Activated CD4-positive, alpha-beta memory T cell treated with anti-CD3 and anti-CD28 coated beads for 36 hours (primary cell): ENCODE measurements at regions of chr3 and their contacts with region 1.

Region 1: GRCh38 chr3:71583566-71584449 is at the start of gene FOXP1:
- DNase-seq: peak; percentile 75
- H3K4me3 Mint-ChIP-seq: peak within 1 kb of the TSS; percentile 88
- H3K27ac Mint-ChIP-seq: peak within 1 kb of the TSS; percentile 91
- H3K4me1 Mint-ChIP-seq: peaks cover 56% of the 10 kb centered on the region
- H3K27me3 Mint-ChIP-seq: peaks cover 1% of the 10 kb centered on the region
- total RNA-seq, gene FOXP1: 94.4 to 102 TPM

Region 2: DNA sequence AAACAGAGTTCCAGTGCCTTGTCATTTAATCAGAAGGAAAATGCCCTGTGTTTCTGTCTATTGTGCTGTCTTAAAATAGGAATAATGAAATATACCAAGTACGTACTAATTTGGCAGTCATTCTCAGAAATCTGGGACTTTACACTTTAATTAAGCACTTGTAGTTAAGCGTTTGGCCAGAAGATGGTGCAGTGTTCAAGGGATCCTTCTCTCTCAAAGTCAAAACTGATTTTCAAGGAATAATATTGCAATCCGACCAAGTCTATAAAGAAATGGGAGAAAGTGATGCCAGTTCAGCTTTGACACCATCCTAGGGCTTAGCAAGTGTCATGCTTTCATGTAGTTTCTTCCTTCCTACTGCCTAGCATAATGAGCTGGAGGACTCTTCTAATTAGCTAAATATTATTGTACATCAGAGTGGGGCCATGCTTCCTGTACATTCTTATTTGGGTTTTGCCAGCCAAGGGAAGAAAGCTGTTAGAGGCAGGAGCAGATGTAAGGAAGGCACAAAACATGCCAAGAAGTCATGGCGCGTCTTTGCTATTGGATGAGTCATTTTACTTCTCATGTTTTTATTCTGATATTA is 1519.5 kb before region 1 on chr3:
- CTCF ChIA-PET with region 1: no interaction called
- POLR2A ChIA-PET with region 1: no interaction called
- intact Hi-C with region 1: loop called (anchors 5 kb)
- DNase-seq: no peak
- H3K4me3 Mint-ChIP-seq: no peak overlapping the region
- H3K27ac Mint-ChIP-seq: no peak overlapping the region
- H3K4me1 Mint-ChIP-seq: no peaks in the 10 kb centered on the region
- H3K27me3 Mint-ChIP-seq: no peaks in the 10 kb centered on the region

Region 3: DNA sequence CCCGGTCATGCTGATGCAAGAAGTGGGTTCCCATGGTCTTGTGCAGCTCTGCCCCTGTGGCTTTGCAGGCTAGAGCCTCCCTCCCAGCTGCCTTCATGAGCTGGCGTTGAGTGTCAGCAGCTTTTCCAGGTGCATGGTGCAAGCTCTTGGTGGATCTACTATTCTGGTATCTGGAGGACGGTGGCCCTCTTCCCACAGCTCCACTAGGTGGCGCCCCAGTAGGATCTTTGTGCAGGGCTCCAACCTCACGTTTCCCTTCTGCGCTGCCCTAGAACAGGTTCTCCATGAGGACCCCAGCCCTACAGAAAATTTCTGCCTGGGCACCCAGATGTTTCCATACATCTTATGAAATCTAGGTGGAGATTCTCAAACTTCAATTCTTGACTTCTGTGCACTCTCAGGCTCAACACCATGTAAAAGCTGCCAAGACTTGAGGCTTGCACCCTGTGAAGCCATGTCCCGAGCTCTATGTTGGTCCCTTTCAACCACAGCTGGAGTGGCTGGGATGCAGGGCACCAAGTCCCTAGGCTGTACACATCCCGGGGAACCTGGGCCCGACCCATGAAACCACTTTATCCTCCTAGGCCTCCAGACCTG is 1033.0 kb before region 1 on chr3:
- CTCF ChIA-PET with region 1: interaction called, 16 read pairs
- POLR2A ChIA-PET with region 1: no interaction called
- intact Hi-C with region 1: loop called (anchors 2 kb)
- DNase-seq: peak; percentile 84
- H3K4me3 Mint-ChIP-seq: no peak overlapping the region
- H3K27ac Mint-ChIP-seq: no peak overlapping the region
- H3K4me1 Mint-ChIP-seq: no peaks in the 10 kb centered on the region
- H3K27me3 Mint-ChIP-seq: peaks cover 3% of the 10 kb centered on the region

Region 4: GRCh38 chr3:71010726-71011455 is 572.9 kb before region 1 on chr3:
- CTCF ChIA-PET with region 1: no interaction called
- POLR2A ChIA-PET with region 1: interaction called, 6 read pairs
- intact Hi-C with region 1: loop called (anchors 1 kb)
- DNase-seq: peak; percentile 87
- H3K4me3 Mint-ChIP-seq: peak overlapping the region; percentile 56
- H3K27ac Mint-ChIP-seq: peak overlapping the region; percentile 92
- H3K4me1 Mint-ChIP-seq: peaks cover 68% of the 10 kb centered on the region
- H3K27me3 Mint-ChIP-seq: no peaks in the 10 kb centered on the region

Region 5: GRCh38 chr3:71078723-71079525 is 504.9 kb before region 1 on chr3:
- CTCF ChIA-PET with region 1: no interaction called
- POLR2A ChIA-PET with region 1: no interaction called
- intact Hi-C with region 1: no loop called
- DNase-seq: no peak
- H3K4me3 Mint-ChIP-seq: peak overlapping the region; percentile 40
- H3K27ac Mint-ChIP-seq: peak overlapping the region; percentile 6
- H3K4me1 Mint-ChIP-seq: peaks cover 90% of the 10 kb centered on the region
- H3K27me3 Mint-ChIP-seq: no peaks in the 10 kb centered on the region

Region 6: GRCh38 chr3:71397046-71397445 is 186.8 kb before region 1 on chr3:
- CTCF ChIA-PET with region 1: interaction called, 4 read pairs
- POLR2A ChIA-PET with region 1: interaction called, 4 read pairs
- intact Hi-C with region 1: loop called (anchors 10 kb)
- DNase-seq: no peak
- H3K4me3 Mint-ChIP-seq: no peak overlapping the region
- H3K27ac Mint-ChIP-seq: no peak overlapping the region
- H3K4me1 Mint-ChIP-seq: peaks cover 72% of the 10 kb centered on the region
- H3K27me3 Mint-ChIP-seq: peaks cover 2% of the 10 kb centered on the region

Region 7: DNA sequence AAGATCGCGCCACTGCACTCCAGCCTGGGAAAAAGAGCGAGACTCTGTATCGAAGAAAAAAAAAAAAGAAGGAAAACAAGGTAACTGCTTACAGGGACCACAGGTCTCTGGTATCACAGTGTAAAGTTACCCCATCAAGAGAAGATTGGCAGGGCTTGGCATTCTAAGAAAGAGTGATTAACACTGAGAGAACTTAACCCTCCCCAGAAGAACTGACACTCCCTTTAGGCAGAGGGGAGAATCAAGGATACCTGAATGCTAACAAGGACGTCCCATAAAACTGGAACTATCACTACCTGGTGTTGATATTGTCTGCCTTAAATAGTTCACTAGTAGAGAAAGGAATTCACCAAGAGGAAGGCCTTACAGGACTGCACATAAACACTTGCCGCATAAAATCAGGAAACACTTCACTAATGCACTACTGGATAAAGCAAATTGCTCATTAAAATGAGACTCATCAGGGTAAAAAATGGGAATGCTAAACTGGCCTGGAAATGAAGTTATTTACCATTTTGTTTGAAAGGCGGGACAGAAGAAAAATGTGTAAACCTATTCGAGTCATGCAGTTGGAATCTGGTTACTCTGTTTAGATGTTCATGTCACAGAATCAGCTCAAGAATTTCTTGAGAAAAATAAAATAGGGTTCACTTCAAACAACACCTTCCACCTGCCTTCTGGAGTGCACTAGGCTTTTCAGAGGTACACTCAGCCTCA is 121.9 kb before region 1 on chr3:
- CTCF ChIA-PET with region 1: interaction called, 3 read pairs
- POLR2A ChIA-PET with region 1: no interaction called
- intact Hi-C with region 1: loop called (anchors 2 kb)
- DNase-seq: no peak
- H3K4me3 Mint-ChIP-seq: peak overlapping the region; percentile 47
- H3K27ac Mint-ChIP-seq: peak overlapping the region; percentile 94
- H3K4me1 Mint-ChIP-seq: peaks cover 67% of the 10 kb centered on the region
- H3K27me3 Mint-ChIP-seq: no peaks in the 10 kb centered on the region